ENCODE measurements at regions of chr5 and their contacts with region 1.

Region 1: DNA sequence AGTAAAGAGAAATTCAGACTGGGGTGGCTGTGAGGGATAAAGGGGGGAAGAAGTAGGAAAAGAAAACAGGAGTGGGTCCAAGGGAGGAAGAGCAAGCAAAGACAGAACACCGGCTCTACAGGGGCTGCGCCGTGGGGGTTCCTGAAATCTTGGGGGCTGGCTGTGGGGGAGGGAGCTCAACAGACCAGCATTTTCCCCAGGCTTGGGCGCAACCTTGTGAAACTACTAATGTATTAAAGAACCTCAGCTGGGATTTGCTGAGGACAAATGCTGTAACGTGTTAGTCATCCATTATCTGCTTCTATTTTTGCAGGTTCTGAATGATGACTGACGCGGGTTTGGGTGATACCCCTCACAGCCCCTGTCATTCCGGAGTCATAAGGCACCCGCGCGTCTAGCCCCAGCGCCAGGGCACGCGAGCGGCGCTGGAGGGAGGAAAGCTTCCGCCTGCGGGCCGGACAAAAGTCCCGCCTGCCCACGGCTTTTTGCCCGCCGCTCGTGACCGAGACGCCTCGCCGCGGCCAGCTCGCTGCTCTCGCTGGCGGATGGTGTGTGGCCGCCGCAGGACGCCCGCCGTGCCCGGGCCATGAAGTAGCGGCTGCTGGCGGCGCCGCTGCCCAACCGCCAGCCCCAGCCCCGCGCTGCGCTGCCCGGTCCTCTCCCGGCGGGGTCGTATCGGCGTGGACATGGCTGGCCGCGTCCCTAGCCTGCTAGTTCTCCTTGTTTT is 110.6 kb downstream of the PAM start:
- DNase-seq: peak; percentile 89
- H3K4me3 ChIP-seq: peak overlapping the region; percentile 71
- H3K27ac ChIP-seq: peak overlapping the region; percentile 86
- H3K4me1 ChIP-seq: peaks cover 21% of the 10 kb centered on the region
- H3K27me3 ChIP-seq: no peaks in the 10 kb centered on the region
- CTCF ChIP-seq: no peak

Region 2: DNA sequence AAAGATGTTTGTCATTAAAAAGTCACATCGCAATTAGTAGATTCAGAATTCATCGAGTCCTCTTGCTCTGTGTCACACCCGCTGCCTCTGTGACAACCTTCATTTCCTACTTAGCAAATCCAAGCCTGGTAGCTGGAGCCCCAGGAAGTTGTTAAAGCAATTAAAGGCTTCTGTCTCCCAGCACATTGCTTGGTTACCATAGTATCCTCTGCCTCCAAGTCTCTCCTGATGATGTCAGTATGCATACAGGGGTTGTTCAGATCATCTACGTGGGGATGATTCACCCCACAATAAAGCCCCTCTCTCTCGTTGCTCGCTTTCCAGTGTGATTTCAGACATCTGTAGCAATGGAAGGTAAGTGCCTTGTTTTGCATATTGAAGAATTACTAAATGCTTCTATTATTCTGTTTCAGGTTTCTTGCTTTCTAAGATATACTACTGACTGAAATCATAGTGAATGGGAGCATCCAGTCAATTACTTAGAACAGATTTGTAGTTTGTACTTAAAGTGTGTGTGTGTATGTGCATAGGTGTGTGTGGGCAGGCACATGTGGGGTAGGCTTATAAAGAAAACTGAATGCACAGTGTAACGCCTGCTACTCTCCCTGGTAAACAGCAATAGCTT is 57.7 kb before region 1 on chr5:
- CTCF ChIA-PET with region 1: no interaction called
- POLR2A ChIA-PET with region 1: no interaction called
- intact Hi-C with region 1: loop called (anchors 5 kb)
- DNase-seq: peak; percentile 95
- H3K4me3 ChIP-seq: peak overlapping the region; percentile 36
- H3K27ac ChIP-seq: peak overlapping the region; percentile 53
- H3K4me1 ChIP-seq: peaks cover 39% of the 10 kb centered on the region
- H3K27me3 ChIP-seq: no peaks in the 10 kb centered on the region
- CTCF ChIP-seq: no peak